Naive thymus-derived CD4-positive, alpha-beta T cell (primary cell): ENCODE measurements at regions of chr4 and their contacts with region 1.

Region 1: GRCh38 chr4:154551872-154552686 is 1.9 kb upstream of the PLRG1 start:
- DNase-seq: peak; percentile 25 to 70 (median 61)
- ATAC-seq: peak; percentile 61
- H3K4me3 ChIP-seq: no peak overlapping the region
- H3K4me3 Mint-ChIP-seq: peak overlapping the region in 2 of 10 donors; percentile 12 to 17
- H3K27ac ChIP-seq: no peak overlapping the region
- H3K27ac Mint-ChIP-seq: peak overlapping the region in 3 of 9 donors; percentile 41 to 67 (median 43)
- H3K4me1 ChIP-seq: peaks cover 6 to 18% of the 10 kb centered on the region in 2 donors
- H3K4me1 Mint-ChIP-seq: peaks cover 13 to 36% (median 31%) of the 10 kb centered on the region in 7 donors
- H3K27me3 ChIP-seq: no peaks in the 10 kb centered on the region
- H3K27me3 Mint-ChIP-seq: peaks cover 0 to 5% (median 0%) of the 10 kb centered on the region in 5 donors

Region 2: GRCh38 chr4:153649572-153649991 is 902.5 kb before region 1 on chr4:
- CTCF ChIA-PET with region 1: no interaction called
- POLR2A ChIA-PET with region 1: no interaction called
- intact Hi-C with region 1: no loop called
- DNase-seq: no peak
- ATAC-seq: no peak
- H3K4me3 ChIP-seq: no peak overlapping the region
- H3K4me3 Mint-ChIP-seq: no peak overlapping the region
- H3K27ac ChIP-seq: no peak overlapping the region
- H3K27ac Mint-ChIP-seq: no peak overlapping the region
- H3K4me1 ChIP-seq: peaks cover 18% of the 10 kb centered on the region in 2 donors
- H3K4me1 Mint-ChIP-seq: peaks cover 18 to 42% (median 33%) of the 10 kb centered on the region in 7 donors
- H3K27me3 ChIP-seq: no peaks in the 10 kb centered on the region
- H3K27me3 Mint-ChIP-seq: no peaks in the 10 kb centered on the region

Region 3: DNA sequence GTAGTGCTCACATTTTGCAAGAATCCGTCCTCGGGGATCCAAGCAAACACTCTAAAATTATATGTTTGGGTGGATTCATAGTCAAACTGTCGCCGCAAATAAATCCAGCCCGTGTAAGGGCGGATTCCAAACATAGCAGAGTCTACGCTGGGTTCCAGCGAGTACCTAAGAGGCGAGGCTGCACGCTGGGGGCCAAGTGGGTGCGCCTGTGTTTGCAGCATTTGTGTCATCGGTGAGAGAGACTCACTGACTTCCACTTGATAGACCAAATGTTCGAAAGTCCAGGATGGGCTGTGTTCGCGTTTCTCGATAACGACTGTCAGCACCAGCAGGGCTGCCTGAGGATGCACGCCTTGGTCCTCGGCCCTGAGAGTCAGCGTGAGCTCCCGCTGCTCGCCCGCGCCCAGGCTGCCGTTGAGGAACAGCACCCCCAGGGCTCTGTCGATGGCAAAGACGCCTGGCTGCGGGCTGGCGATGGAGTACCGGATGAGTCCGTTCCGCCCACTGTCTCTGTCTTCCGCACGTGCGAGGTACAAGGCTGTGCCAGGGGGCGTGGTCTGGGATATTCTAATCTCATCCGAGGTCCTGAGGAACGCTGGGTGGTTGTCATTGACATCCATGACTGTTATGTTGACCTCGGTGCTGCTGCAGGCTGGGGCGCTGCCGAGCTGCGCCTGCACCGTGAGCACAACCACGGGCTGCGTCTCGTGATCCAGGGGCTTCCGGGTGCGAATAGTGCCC is 219.2 kb before region 1 on chr4:
- CTCF ChIA-PET with region 1: no interaction called
- POLR2A ChIA-PET with region 1: no interaction called
- intact Hi-C with region 1: loop called (anchors 2 to 5 kb)
- DNase-seq: peak; percentile 25 to 68 (median 60)
- ATAC-seq: peak; percentile 85
- H3K4me3 ChIP-seq: peak overlapping the region; percentile 39
- H3K4me3 Mint-ChIP-seq: peak overlapping the region; percentile 80 to 92 (median 86)
- H3K27ac ChIP-seq: no peak overlapping the region
- H3K27ac Mint-ChIP-seq: peak overlapping the region in 7 of 9 donors; percentile 29 to 86 (median 83)
- H3K4me1 ChIP-seq: no peaks in the 10 kb centered on the region
- H3K4me1 Mint-ChIP-seq: peaks cover 4 to 13% (median 12%) of the 10 kb centered on the region in 7 donors
- H3K27me3 ChIP-seq: no peaks in the 10 kb centered on the region
- H3K27me3 Mint-ChIP-seq: peaks cover 14 to 53% (median 19%) of the 10 kb centered on the region in 5 donors

Region 4: DNA sequence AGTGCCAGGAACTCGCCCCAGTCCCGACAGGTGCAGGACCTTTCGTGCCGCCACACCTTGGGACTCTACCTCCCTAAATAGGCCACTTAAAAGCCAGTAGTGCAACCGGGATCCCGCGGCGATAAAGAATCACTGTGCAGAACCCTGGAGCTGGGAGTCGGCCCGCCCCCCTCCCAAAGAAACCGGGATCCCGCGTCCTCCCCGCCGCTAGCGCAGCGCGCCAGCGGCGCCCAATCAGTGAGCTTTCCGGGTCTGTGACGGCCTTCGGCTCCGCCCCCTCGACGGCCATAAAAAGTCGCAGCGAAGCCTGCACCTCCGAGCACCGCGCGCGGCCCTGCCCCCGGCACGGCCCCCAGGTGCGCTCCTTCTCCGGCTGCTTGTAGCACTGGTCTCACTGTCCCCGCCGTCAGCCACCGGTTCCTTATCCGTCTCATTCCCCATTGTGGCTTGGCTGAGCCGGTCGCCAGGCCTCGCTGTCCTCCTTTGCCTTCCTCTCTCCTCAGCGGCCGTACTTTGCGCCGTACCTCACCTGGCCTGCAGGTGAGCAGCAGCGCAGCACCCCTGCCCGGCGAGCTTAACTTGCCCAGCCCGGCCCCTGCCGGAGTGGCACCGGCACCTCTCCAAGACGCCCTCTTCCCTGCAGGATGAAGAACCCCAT is 191.7 kb after region 1 on chr4 and contains the start of gene LRAT:
- CTCF ChIA-PET with region 1: no interaction called
- POLR2A ChIA-PET with region 1: no interaction called
- intact Hi-C with region 1: loop called in 1 of 2 experiments (anchors 10 kb)
- DNase-seq: peak in 7 of 9 donors; percentile 0 to 45 (median 10)
- ATAC-seq: peak; percentile 78
- H3K4me3 ChIP-seq: peak within 1 kb of the TSS; percentile 30
- H3K4me3 Mint-ChIP-seq: peak within 1 kb of the TSS; percentile 82 to 92 (median 88)
- H3K27ac ChIP-seq: no peak within 1 kb of the TSS
- H3K27ac Mint-ChIP-seq: peak within 1 kb of the TSS in 1 of 9 donors; percentile 29
- H3K4me1 ChIP-seq: no peaks in the 10 kb centered on the region
- H3K4me1 Mint-ChIP-seq: peaks cover 11 to 38% (median 21%) of the 10 kb centered on the region in 7 donors
- H3K27me3 ChIP-seq: peaks cover 0 to 9% of the 10 kb centered on the region in 2 donors
- H3K27me3 Mint-ChIP-seq: peaks cover 78 to 90% (median 81%) of the 10 kb centered on the region in 5 donors
- total RNA-seq, gene LRAT: not detected

Region 5: DNA sequence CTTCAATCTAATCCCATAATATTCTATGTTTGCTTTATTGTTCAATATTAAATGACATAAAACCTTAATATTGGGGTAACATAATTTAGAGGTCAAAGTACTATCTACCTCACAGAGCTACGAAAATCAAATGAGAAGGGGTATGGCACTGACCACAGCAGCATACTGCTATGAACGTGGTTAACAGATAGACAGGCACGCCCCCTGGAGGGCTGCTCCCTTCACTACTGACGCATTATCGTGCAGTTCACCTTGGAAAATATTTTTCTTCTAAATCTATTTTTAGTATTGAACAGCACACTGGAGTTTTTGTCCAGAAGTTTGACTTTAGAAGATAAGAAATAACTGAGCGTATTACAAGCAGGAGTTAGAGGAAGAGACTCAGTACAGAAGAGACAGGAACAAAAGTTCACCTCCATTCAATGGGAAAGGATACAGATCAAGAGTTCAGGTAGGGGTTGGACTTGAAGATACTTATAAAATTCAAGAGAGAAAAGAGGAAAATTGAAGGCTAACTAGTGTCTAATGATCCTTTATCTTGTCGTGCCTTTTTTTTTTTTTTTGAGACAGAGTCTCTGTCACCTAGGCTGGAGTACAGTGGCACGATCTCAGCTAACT is 802.0 kb after region 1 on chr4:
- CTCF ChIA-PET with region 1: interaction called, 4 read pairs
- POLR2A ChIA-PET with region 1: no interaction called
- intact Hi-C with region 1: loop called in 1 of 2 experiments (anchors 1 kb)
- DNase-seq: no peak
- ATAC-seq: peak; percentile 65
- H3K4me3 ChIP-seq: no peak overlapping the region
- H3K4me3 Mint-ChIP-seq: no peak overlapping the region
- H3K27ac ChIP-seq: no peak overlapping the region
- H3K27ac Mint-ChIP-seq: no peak overlapping the region
- H3K4me1 ChIP-seq: no peaks in the 10 kb centered on the region
- H3K4me1 Mint-ChIP-seq: peaks cover 0 to 5% (median 0%) of the 10 kb centered on the region in 7 donors
- H3K27me3 ChIP-seq: no peaks in the 10 kb centered on the region
- H3K27me3 Mint-ChIP-seq: no peaks in the 10 kb centered on the region

Region 6: DNA sequence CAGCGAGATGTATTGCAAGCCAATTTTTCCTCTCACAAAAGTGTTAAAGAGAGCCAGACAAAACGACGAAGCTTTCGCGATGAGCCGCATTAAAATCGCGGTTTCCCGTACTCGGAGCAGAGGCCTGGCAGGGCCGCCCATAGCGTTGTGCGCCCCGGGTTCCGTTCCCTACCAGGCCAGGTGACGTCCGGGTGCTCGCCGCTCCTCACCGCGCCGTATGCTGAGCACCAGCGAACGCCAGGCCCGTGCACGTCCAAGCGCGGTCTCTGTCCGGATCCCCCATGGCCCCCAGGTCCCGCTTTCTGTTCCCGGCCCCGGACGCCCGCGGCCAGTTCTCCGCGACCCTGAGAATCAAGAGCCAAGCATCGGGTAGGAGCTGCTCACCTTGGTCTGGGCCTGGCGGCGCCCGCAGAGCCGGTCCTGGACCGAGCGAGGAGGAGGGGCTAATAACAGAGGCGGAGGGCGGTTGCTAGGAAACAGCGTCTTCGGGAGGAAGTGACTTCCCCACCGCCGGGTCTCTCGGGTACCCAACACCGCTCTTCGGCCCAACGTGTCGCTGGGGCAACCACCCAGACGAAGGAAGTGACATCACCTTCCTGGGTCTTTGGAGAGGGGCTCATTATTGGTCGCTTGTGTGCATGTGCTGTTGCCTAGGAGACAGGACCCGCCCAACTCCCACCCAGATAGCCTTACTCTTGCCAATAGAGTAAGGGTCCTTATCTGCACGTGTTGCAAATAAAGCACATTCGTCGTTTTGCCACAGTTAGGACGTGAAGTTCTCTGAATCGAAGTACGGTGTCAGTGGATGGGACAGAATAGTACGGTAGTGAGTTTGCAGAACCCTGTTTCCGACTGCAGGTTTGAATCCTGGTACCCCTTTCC is 824.5 kb after region 1 on chr4 and contains the start of gene MAP9:
- CTCF ChIA-PET with region 1: interaction called, 7 read pairs
- POLR2A ChIA-PET with region 1: no interaction called
- intact Hi-C with region 1: loop called (anchors 1 kb)
- DNase-seq: peak; percentile 74 to 92 (median 89)
- ATAC-seq: peak; percentile 91
- H3K4me3 ChIP-seq: peak within 1 kb of the TSS; percentile 73
- H3K4me3 Mint-ChIP-seq: peak within 1 kb of the TSS; percentile 81 to 93 (median 92)
- H3K27ac ChIP-seq: peak within 1 kb of the TSS; percentile 77
- H3K27ac Mint-ChIP-seq: peak within 1 kb of the TSS; percentile 72 to 97 (median 91)
- H3K4me1 ChIP-seq: peaks cover 8 to 11% of the 10 kb centered on the region in 2 donors
- H3K4me1 Mint-ChIP-seq: peaks cover 4 to 22% (median 18%) of the 10 kb centered on the region in 7 donors
- H3K27me3 ChIP-seq: no peaks in the 10 kb centered on the region
- H3K27me3 Mint-ChIP-seq: peaks cover 0 to 5% (median 0%) of the 10 kb centered on the region in 5 donors
- total RNA-seq, gene MAP9: 3.2 to 20.5 (median 7.0) TPM

Region 7: GRCh38 chr4:155491336-155492120 is 939.4 kb after region 1 on chr4:
- CTCF ChIA-PET with region 1: no interaction called
- POLR2A ChIA-PET with region 1: no interaction called
- intact Hi-C with region 1: no loop called
- DNase-seq: no peak
- ATAC-seq: no peak
- H3K4me3 ChIP-seq: no peak overlapping the region
- H3K4me3 Mint-ChIP-seq: no peak overlapping the region
- H3K27ac ChIP-seq: no peak overlapping the region
- H3K27ac Mint-ChIP-seq: no peak overlapping the region
- H3K4me1 ChIP-seq: no peaks in the 10 kb centered on the region
- H3K4me1 Mint-ChIP-seq: no peaks in the 10 kb centered on the region
- H3K27me3 ChIP-seq: no peaks in the 10 kb centered on the region
- H3K27me3 Mint-ChIP-seq: peaks cover 0 to 9% (median 5%) of the 10 kb centered on the region in 5 donors

Region 8: DNA sequence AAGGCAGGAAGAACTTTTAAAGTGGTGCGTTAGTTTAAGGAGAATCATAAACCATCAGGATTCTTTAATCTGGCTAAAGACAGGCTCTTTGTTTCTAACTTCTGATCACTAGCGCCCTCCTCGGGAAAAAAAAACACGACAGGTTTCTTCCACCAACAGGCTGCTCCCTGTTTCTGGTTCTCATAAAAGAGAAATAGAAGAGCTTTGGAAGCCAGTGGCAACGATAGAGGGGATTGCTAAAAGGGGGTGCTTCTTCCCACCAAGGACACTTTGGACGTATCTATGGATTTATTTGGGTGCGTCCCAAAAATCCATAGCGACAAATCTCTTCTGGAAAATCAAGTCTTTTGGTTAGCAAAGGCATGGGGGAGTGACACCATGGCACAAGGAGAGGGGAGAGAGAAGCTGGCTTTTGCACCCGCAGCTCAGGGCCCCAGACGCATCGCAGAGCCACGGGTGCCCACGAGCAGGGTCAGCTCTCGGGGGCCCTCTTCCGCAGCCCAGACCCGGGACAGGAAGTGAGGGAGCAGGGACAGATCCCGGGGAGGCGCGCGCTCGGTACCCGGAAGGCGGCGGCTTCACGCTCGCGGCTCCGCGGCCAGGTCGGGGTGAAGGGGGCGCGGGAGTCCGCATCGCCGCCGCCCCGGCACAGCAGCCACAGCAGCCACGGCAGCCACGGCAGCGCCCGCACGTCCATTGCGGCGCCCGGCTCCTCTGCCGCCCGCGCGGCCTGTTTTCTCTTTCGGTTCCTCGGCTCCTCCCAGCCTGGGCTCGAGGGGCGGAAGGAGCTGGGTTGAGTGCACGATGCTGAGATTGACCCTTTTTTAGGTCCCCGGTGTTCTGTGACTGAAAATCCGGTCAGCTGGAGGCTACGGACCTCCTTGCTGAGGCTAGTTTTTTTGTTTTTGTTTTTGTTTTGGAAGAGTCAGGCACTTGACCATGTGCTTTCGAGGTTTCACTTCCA is 1401.4 kb after region 1 on chr4 and contains the start of gene CTSO:
- CTCF ChIA-PET with region 1: no interaction called
- POLR2A ChIA-PET with region 1: interaction called, 5 read pairs
- intact Hi-C with region 1: loop called (anchors 1 to 2 kb)
- DNase-seq: peak; percentile 51 to 80 (median 73)
- ATAC-seq: peak; percentile 92
- H3K4me3 ChIP-seq: peak within 1 kb of the TSS; percentile 94
- H3K4me3 Mint-ChIP-seq: peak within 1 kb of the TSS; percentile 90 to 99 (median 98)
- H3K27ac ChIP-seq: peak within 1 kb of the TSS; percentile 92
- H3K27ac Mint-ChIP-seq: peak within 1 kb of the TSS; percentile 97 to 100 (median 99)
- H3K4me1 ChIP-seq: peaks cover 4% of the 10 kb centered on the region in 2 donors
- H3K4me1 Mint-ChIP-seq: peaks cover 5 to 43% (median 30%) of the 10 kb centered on the region in 7 donors
- H3K27me3 ChIP-seq: no peaks in the 10 kb centered on the region
- H3K27me3 Mint-ChIP-seq: peaks cover 4 to 11% (median 8%) of the 10 kb centered on the region in 5 donors
- total RNA-seq, gene CTSO: 5.3 to 13.9 (median 12.1) TPM